Right ventricle myocardium inferior (tissue), 1 donor: ENCODE measurements at regions of chr19 and their contacts with region 1.

Region 1: GRCh38 chr19:34712395-34713261 is 21.4 kb upstream of the ZNF181 start:
- DNase-seq: no peak
- ATAC-seq: peak; percentile 52

Region 2: DNA sequence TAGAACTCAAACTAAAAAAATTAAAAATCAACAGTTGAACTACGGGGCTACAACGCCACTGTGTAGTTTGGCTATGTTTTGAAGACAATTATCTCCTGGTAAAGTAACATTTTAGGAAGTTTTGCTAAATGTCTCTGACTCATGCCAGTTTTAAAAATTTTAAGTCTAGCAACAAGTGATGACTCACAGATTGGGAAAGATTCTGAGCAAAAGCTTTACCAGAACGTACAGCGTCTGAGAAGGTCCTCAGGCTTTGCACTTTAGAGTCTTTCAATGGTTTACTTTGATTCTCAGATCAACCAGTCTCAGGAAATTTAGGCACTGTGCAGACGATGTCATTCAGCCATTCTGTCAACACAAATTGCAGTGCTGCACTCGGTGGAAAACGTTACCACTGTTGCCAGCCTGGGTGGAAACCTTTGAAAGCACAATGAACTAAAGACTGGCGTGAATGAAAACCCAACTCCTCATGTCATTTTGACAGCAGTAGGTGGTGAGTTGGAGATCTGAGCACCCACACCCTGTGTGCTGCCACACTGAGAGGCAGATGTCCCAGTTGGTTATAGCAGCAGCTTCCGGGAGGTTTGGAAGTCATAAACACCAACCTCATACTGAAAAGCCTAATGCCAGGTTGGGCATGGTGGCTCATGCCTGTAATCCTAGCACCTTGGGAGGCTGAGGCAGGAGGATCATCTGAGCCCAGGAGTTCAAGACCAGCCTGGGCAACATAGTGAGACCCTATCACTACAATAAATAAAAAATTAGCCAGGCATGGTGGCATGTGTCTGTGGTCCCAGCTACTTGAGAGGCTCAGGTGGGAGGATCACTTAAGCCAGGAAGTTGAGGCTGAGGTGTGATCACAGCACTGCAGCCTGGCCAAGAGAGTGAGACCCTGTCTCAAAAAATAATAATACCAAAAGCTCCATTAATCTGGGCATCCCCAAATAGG is 237.3 kb before region 1 on chr19:
- intact Hi-C with region 1: no loop called
- DNase-seq: no peak
- ATAC-seq: no peak

Region 3: GRCh38 chr19:34501339-34502320 is 211.0 kb before region 1 on chr19:
- intact Hi-C with region 1: loop called (anchors 5 kb)
- DNase-seq: peak; percentile 94
- ATAC-seq: peak; percentile 90

Region 4: GRCh38 chr19:34556488-34556887 is 156.1 kb before region 1 on chr19:
- intact Hi-C with region 1: loop called (anchors 5 kb)
- DNase-seq: no peak
- ATAC-seq: peak; percentile 67

Region 5: DNA sequence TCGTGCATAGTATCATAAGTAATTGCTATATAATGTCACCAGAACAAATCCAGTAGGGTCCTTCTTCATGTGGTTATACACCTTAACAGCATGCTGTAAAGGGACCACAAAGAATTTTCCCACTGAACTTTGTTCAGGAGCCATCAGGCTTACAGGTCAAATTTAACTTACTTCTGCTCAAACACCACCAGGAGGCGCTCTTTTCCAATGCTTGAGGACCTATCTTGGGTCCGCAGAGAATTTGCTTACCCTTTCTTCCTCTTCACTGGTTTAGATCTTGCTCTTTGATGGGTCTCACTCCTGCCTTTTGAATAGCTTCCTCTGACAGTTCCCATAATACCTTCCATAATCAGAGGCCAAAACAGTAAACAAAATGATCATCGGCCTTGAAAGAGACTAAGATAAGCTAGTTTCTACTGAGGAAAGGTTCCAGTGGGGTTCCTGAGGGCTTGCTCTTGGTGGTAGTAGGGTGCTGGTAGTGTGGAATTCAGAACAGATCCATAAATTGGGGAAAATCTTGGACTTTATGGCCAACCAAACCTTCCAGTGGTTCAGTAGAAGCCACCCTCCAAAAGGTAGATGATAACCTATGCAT is 73.0 kb before region 1 on chr19:
- intact Hi-C with region 1: loop called (anchors 1 kb)
- DNase-seq: no peak
- ATAC-seq: peak; percentile 54